Prostate gland (tissue), 2 donors: ENCODE measurements at regions of chr11 and their contacts with region 1.

Region 1: DNA sequence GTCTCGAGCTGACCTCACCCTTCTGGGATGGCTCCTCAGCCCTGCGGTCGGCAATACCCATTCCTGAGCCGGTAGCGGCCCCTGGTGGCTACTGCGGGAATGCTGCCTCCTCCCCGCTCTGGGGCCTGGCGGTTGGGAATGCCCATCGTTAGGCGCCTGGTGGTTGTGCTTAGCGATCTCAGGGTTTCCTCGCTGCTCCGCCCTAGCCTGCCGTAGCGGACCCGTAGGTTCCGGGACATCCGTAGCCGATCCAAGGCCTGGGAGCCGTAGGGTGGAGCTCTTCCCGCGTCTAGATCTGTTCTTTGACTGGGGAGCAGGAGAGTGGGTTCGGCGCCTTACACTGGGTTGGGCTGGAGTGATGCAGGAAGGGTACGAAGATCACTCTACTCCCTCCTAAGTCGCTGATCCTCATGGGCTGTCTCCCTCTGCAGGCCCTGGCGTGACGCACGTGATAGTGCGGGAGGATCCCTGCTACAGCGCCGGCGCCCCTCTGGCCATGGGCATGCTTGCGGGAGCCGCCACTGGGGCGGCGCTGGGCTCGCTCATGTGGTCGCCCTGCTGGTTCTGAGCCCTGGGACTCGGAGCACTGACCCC is 14.8 kb downstream of the PLEKHB1 start:
- DNase-seq: peak; percentile 83
- H3K4me3 ChIP-seq: peak overlapping the region; percentile 16 to 20
- H3K27ac ChIP-seq: peak overlapping the region in 1 of 2 donors; percentile 25
- H3K4me1 ChIP-seq: no peaks in the 10 kb centered on the region
- H3K27me3 ChIP-seq: no peaks in the 10 kb centered on the region
- CTCF ChIP-seq: peak; percentile 89 to 99 (median 94)
- POLR2A ChIP-seq: no peak

Region 2: DNA sequence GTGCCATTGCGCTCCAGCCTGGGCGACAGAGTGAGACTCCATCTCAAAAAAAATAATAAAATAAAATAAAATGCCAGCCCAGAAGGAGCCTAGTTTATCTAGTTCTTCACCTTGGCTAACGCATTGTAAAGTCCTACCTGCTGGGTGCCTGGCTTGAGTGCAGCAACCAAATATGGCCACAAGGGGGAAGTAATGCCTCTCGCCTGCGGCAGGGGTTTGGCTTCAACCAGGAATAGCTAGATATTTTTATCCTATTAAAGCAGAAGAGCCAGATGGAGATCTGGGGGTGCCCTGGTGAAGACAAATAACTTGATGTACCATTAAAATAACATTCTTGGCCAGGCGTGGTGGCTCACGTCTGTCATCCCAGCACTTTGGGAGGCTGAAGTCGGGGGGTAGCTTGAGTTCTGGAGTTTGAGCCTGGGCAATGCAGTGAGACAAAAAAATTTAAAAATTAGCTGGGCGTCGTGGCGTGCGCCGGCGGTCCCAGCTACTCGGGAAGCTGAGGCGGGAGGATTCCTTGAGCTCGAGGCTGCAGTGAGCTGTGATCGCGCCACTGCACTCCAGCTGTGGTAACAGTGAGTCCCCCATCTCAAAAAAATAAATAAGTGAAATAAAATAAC is 35.3 kb before region 1 on chr11:
- intact Hi-C with region 1: loop called (anchors 2 kb)
- DNase-seq: peak; percentile 68
- H3K4me3 ChIP-seq: no peak overlapping the region
- H3K27ac ChIP-seq: no peak overlapping the region
- H3K4me1 ChIP-seq: no peaks in the 10 kb centered on the region
- H3K27me3 ChIP-seq: no peaks in the 10 kb centered on the region
- CTCF ChIP-seq: peak; percentile 66 to 87 (median 83)
- POLR2A ChIP-seq: no peak

Region 3: DNA sequence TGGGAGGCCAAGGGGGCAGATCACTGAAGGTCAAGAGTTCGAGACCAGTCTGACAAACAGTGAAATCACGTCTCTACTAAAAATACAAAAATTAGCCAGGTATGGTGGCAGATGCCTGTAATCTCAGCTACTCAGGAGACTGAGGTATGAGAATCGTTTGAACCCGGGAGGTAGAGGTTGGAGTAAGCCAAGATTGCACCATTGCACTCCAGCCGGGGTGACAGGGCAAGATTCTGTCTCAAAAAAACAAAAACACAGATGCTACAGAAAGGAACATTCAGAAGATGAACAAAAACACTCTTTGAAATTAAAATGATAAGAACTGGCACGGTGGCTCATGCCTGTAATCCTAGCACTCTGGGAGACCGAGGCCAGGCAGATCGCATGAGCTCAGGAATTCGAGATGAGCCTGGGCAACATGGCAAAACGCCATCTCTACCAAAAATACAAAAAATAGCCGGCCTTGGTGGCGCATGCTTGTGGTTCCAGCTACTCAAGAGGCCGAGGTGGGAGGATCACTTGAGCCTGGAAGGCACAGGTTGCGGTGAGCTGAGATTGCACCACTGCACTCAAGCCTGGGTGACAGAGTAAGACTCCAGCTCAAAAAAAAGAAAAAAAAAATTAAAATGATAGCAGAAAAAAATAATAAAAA is 91.2 kb after region 1 on chr11:
- intact Hi-C with region 1: no loop called
- DNase-seq: no peak
- H3K4me3 ChIP-seq: no peak overlapping the region
- H3K27ac ChIP-seq: no peak overlapping the region
- H3K4me1 ChIP-seq: no peaks in the 10 kb centered on the region
- H3K27me3 ChIP-seq: no peaks in the 10 kb centered on the region
- CTCF ChIP-seq: no peak
- POLR2A ChIP-seq: no peak